ENCODE measurements at regions of chr1 and their contacts with region 1.

Region 1: GRCh38 chr1:1419642-1420384 is 1.3 kb downstream of the ANKRD65 start:
- DNase-seq: no peak
- H3K4me3 ChIP-seq: peak overlapping the region; percentile 7 to 50 (median 26); a peak in 6 of 8 replicates
- H3K27ac ChIP-seq: no peak overlapping the region; the same call in 1 of the 2 replicates
- H3K4me1 ChIP-seq: peaks cover 0 to 29% (median 23%) of the 10 kb centered on the region in 4 experiments; a peak in 6 of 7 replicates
- H3K27me3 ChIP-seq: no peaks in the 10 kb centered on the region; a peak in 2 of 7 replicates
- CTCF ChIP-seq: no peak; a peak in 1 of 4 replicates
- EP300 ChIP-seq: no peak
- POLR2A ChIP-seq: no peak
- RAD21 ChIP-seq: no peak; a peak in 1 of 4 replicates

Region 2: GRCh38 chr1:1351511-1352427 is 68.0 kb before region 1 on chr1:
- CTCF ChIA-PET with region 1: no interaction called
- POLR2A ChIA-PET with region 1: no interaction called
- DNase-seq: no peak
- H3K4me3 ChIP-seq: peak overlapping the region; percentile 8 to 48 (median 23); a peak in 5 of 8 replicates
- H3K27ac ChIP-seq: no peak overlapping the region
- H3K4me1 ChIP-seq: peaks cover 0 to 49% (median 33%) of the 10 kb centered on the region in 4 experiments; a peak in 6 of 7 replicates
- H3K27me3 ChIP-seq: peaks cover 9 to 17% (median 14%) of the 10 kb centered on the region in 4 experiments
- CTCF ChIP-seq: no peak
- EP300 ChIP-seq: no peak
- POLR2A ChIP-seq: no peak
- RAD21 ChIP-seq: no peak

Region 3: GRCh38 chr1:1406817-1407635 is 12.8 kb before region 1 on chr1 and contains the start of gene MRPL20:
- CTCF ChIA-PET with region 1: interaction called, 32 read pairs
- POLR2A ChIA-PET with region 1: interaction called, 515 read pairs
- DNase-seq: peak; percentile 61 to 93
- H3K4me3 ChIP-seq: peak within 1 kb of the TSS; percentile 91 to 99 (median 93)
- H3K27ac ChIP-seq: peak within 1 kb of the TSS; percentile 94
- H3K4me1 ChIP-seq: peaks cover 8 to 18% (median 14%) of the 10 kb centered on the region in 4 experiments
- H3K27me3 ChIP-seq: no peaks in the 10 kb centered on the region
- CTCF ChIP-seq: 0 out of 4 replicates have a peak, but pooled peaks of 1 of the 3 experiments have one; percentile 0
- EP300 ChIP-seq: no peak
- POLR2A ChIP-seq: peak in 1 of 2 experiments; percentile 94; a peak in 2 of 3 replicates
- RAD21 ChIP-seq: no peak
- total RNA-seq, gene MRPL20: 126 and 130 TPM in 2 replicates

Region 4: DNA sequence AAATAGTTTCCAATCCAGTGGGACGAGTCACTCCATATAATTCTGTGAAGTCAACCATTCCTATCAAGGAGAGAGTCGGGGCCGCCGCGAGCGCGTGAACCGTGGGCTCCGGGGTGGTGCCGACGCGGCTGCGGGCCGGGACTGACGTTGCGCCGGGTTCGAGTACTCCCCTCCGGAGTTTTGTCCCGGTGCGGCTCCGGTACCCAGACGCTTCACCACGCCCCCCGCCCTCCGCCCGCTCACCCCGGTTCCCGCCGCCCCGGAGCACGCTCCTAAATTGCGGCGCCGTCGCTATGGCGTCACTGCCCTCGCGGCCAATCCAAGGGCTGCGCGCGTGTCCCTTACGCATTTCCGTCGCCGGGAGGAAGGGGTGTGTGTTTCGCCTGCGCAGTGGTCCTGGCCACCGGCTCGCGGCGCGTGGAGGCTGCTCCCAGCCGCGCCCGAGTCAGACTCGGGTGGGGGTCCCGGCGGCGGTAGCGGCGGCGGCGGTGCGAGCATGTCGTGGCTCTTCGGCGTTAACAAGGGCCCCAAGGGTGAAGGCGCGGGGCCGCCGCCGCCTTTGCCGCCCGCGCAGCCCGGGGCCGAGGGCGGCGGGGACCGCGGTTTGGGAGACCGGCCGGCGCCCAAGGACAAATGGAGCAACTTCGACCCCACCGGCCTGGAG is 51.7 kb after region 1 on chr1 and contains the start of gene ATAD3B:
- CTCF ChIA-PET with region 1: no interaction called
- POLR2A ChIA-PET with region 1: no interaction called
- DNase-seq: peak; percentile 36 to 96
- H3K4me3 ChIP-seq: peak within 1 kb of the TSS; percentile 79 to 93 (median 88)
- H3K27ac ChIP-seq: no peak within 1 kb of the TSS; the same call in 1 of the 2 replicates
- H3K4me1 ChIP-seq: peaks cover 0 to 8% (median under 1%) of the 10 kb centered on the region in 4 experiments; a peak in 2 of 7 replicates
- H3K27me3 ChIP-seq: no peaks in the 10 kb centered on the region
- CTCF ChIP-seq: no peak
- EP300 ChIP-seq: peak in 1 of 2 experiments; percentile 50; a peak in 1 of 3 replicates
- POLR2A ChIP-seq: peak in 1 of 2 experiments; percentile 52; a peak in 2 of 3 replicates
- RAD21 ChIP-seq: no peak
- total RNA-seq, gene ATAD3B: 63.0 and 64.4 TPM in 2 replicates

Region 5: DNA sequence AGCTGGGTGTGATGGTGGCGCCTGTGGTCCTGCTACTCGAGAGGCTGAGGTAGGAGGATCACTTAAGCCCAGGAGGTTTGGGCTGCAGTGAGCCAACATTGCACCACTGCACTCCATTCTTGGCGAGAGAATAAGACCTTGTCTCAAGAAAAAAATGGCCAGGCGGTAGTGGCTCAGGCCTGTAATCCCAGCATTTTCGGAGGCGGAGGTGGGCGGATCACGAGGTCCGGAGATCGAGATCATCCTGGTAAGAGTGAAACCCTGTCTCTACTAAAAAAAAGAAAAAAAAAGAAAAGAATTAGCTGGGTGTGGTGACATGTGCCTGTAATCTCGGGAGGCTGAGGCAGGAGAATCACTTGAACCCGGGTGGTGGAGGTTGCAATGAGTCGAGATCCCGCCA is 63.0 kb after region 1 on chr1:
- CTCF ChIA-PET with region 1: no interaction called
- POLR2A ChIA-PET with region 1: no interaction called
- DNase-seq: no peak
- H3K4me3 ChIP-seq: no peak overlapping the region
- H3K27ac ChIP-seq: no peak overlapping the region
- H3K4me1 ChIP-seq: no peaks in the 10 kb centered on the region; a peak in 1 of 7 replicates
- H3K27me3 ChIP-seq: no peaks in the 10 kb centered on the region
- CTCF ChIP-seq: no peak
- EP300 ChIP-seq: no peak
- POLR2A ChIP-seq: no peak
- RAD21 ChIP-seq: no peak